Posterior vena cava (tissue), 2 donors: ENCODE measurements at regions of chr5 and their contacts with region 1.

Region 1: GRCh38 chr5:145834917-145835847 is at the start of gene PRELID2:
- DNase-seq: peak; percentile 95
- total RNA-seq, gene PRELID2: 16.1 to 24.8 TPM

Region 2: DNA sequence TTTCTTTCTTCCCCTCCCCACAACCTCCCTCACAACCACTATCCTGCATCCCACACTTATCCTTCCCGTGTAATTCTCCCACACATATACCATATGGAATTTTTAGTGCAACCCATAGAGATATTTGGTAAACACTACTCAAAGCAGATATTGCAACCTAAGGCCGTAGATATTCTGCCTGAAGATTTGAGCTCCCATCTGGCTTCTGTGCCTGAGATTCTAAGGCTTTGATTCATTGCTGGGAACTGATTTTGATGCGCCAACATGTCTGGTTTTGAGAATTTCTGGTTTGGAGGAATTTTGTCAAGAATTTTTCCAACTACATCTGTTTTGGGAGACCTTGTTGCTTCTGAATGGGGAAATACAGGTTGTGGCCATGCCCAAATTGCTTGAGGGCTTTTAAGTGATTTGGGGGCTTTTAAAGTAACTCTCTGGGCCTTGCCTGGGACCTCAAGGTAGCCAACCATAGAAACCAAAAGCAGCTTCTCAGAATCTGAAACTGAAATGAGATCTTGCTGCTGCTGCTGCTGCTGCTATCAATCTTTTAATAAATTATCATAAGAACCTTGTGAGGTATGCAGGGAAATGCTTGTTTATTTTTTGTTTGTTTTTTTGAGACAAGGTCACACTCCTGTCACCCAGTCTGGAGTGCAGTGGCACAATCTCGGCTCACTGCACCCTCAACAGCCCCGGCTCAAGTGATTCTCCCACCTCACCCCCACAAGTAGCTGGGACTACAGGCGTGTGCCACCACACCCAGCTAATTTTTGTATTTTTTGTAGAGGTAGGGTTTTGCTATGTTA is 234.0 kb after region 1 on chr5:
- intact Hi-C with region 1: loop called in 1 of 2 experiments (anchors 10 kb)
- DNase-seq: no peak

Region 3: GRCh38 chr5:146111409-146111808 is 276.2 kb after region 1 on chr5:
- intact Hi-C with region 1: no loop called
- DNase-seq: no peak